MCF 10A (cell line): ENCODE measurements at regions of chr5 and their contacts with region 1.

Region 1: GRCh38 chr5:61301341-61302199 is 30.5 kb upstream of the ZSWIM6 start:
- DNase-seq: peak; percentile 98
- H3K4me3 Mint-ChIP-seq: peak overlapping the region; percentile 10
- H3K27ac Mint-ChIP-seq: no peak overlapping the region
- H3K4me1 Mint-ChIP-seq: peaks cover 48% of the 10 kb centered on the region
- H3K27me3 Mint-ChIP-seq: no peaks in the 10 kb centered on the region
- CTCF ChIP-seq: no peak

Region 2: DNA sequence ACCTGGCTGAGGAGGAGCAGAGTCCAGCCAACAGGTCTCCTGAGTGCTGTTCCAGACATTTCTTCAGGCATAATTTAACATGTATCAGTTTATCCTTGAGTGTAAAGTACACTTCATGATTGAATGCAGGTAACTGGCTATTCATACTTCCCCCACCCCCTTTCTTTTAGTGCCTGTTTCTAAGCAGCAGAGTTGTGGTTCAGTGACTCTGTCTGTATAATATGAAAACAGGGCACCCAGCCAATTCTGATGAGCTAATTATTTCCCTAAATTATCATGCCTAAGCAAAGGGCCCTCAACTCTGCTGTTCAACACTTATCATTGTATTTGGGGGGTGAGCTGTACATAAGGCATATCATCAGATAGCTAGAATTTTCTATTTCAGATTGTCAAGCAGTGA is 21.4 kb before region 1 on chr5:
- CTCF ChIA-PET with region 1: interaction called, 5 read pairs
- POLR2A ChIA-PET with region 1: interaction called, 35 read pairs
- intact Hi-C with region 1: no loop called
- DNase-seq: peak; percentile 92
- H3K4me3 Mint-ChIP-seq: no peak overlapping the region
- H3K27ac Mint-ChIP-seq: no peak overlapping the region
- H3K4me1 Mint-ChIP-seq: peaks cover 38% of the 10 kb centered on the region
- H3K27me3 Mint-ChIP-seq: no peaks in the 10 kb centered on the region
- CTCF ChIP-seq: no peak

Region 3: DNA sequence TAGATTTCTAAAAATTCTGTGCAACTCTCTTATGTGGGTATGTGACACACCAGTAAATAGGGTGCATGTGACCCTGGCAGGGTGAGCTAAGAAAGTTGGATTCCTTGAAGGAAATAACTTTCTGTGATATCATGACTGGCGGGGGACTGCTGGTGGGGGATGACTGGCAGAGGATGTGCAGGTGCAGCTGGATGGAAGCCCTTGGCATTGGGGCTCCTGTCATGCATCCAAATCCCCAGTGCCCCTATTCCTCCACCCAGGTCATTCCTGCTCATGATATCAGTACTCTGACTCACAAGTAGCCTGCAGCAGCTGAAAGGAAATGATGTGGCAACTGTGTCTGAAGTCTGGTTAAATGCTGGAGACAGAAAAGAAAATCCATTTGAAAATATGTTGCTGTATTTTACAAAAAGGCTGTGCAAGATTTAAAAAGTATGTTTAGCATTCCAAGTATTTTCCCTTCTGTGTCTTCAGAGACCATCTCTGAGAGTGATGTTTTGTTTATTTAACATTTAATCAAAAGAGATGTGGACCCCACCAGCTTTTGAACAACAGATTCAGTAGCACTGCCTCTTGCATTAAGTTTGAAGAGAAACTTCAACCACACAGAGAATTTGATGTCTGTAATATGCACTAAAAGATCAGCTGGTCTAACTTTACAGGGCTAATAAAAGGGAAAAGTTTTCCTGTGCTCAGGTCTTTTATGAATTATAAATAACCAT is 12.6 kb after region 1 on chr5:
- CTCF ChIA-PET with region 1: interaction called, 4 read pairs
- POLR2A ChIA-PET with region 1: interaction called, 56 read pairs
- intact Hi-C with region 1: loop called (anchors 1 kb)
- DNase-seq: peak; percentile 84
- H3K4me3 Mint-ChIP-seq: no peak overlapping the region
- H3K27ac Mint-ChIP-seq: peak overlapping the region; percentile 73
- H3K4me1 Mint-ChIP-seq: peaks cover 20% of the 10 kb centered on the region
- H3K27me3 Mint-ChIP-seq: no peaks in the 10 kb centered on the region
- CTCF ChIP-seq: no peak